ENCODE measurements at regions of chr3 and their contacts with region 1.

Region 1: DNA sequence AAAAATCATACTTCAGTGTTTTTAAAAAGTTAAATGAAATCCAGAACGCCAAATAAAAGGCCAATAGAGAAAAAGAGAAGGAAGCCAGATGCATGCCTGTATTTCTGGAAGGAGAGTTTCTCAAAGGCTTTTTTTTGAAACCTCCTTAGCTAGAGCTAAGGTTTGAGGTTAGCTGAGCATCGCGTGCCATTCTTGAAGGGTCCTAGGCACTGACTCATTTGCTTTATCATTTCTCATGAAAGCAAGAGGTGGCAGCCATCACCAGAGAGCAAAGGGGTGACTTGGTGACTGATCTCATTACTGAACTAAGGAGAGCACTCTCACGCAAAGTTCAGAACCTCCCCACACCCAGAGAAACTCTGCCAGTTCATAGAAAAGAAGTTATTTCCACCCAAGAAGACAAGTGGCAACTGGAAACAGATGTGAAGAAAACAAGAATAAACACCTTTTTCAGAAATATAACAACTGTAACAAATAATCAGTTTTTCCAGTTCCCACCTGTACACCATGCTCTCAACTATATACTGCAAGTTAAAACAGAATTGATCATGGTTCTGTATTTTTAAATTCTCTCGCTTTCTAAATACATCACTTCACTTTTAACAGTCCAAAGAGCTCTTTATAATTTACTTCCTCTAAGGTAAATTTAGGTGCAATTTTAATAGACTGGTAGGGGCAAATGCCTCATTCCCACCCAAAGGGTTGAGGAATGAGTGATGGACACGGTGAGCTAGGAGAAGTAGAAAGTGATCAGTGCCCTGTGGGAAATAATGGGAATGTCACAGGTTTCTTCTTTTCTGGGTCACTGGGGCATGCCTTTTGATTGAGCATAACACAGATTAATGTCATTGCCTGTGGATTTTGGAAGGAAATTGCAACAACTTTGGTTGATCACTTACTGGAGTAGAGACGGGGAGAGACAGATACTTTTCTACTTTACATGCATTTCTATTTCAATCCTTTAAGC is 24.7 kb downstream of the GPR15 start:
- DNase-seq: peak; percentile 90
- H3K4me3 Mint-ChIP-seq: peak overlapping the region; percentile 72
- H3K27ac Mint-ChIP-seq: peak overlapping the region; percentile 96
- H3K4me1 Mint-ChIP-seq: peaks cover 87% of the 10 kb centered on the region
- H3K27me3 Mint-ChIP-seq: no peaks in the 10 kb centered on the region

Region 2: DNA sequence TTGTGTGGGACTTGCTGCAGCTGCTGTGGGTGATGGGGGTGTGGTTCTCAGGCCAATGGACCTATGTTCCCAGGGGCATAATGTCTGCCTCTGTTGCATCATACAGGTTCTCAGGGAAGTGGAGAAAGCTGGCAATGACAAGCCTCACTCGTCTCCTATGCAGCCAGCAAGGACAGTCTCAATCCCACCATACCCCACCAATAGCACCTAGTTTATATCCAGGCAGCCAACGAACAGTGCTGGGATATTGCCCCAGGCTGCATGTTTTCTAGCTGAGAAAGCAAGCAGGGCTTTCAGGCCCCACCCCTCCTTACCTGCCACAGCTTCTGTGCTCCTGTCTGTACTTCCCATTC is 73.3 kb before region 1 on chr3:
- CTCF ChIA-PET with region 1: no interaction called
- POLR2A ChIA-PET with region 1: no interaction called
- DNase-seq: no peak
- H3K4me3 Mint-ChIP-seq: no peak overlapping the region
- H3K27ac Mint-ChIP-seq: no peak overlapping the region
- H3K4me1 Mint-ChIP-seq: no peaks in the 10 kb centered on the region
- H3K27me3 Mint-ChIP-seq: peaks cover 36% of the 10 kb centered on the region

Region 3: GRCh38 chr3:98522244-98523090 is 34.0 kb before region 1 on chr3 and contains the start of gene CLDND1:
- CTCF ChIA-PET with region 1: interaction called, 6 read pairs
- POLR2A ChIA-PET with region 1: interaction called, 19 read pairs
- DNase-seq: peak; percentile 96
- H3K4me3 Mint-ChIP-seq: peak within 1 kb of the TSS; percentile 89
- H3K27ac Mint-ChIP-seq: peak within 1 kb of the TSS; percentile 96
- H3K4me1 Mint-ChIP-seq: peaks cover 64% of the 10 kb centered on the region
- H3K27me3 Mint-ChIP-seq: no peaks in the 10 kb centered on the region
- total RNA-seq, gene CLDND1: 399 to 432 TPM

Region 4: GRCh38 chr3:98545940-98546339 is 10.5 kb before region 1 on chr3:
- CTCF ChIA-PET with region 1: interaction called, 10 read pairs
- POLR2A ChIA-PET with region 1: interaction called, 7 read pairs
- DNase-seq: peak; percentile 56
- H3K4me3 Mint-ChIP-seq: peak overlapping the region; percentile 53
- H3K27ac Mint-ChIP-seq: peak overlapping the region; percentile 91
- H3K4me1 Mint-ChIP-seq: peaks cover 70% of the 10 kb centered on the region
- H3K27me3 Mint-ChIP-seq: no peaks in the 10 kb centered on the region

Measured in activated CD4-positive, alpha-beta T cell treated with anti-CD3 and anti-CD28 coated beads, Interleukin-2, amount 10 ng/mL, durations not matched to agents 7 days and 5 days (primary cell).